HepG2 (cell line): ENCODE measurements at regions of chr15 and their contacts with region 1.

Region 1: DNA sequence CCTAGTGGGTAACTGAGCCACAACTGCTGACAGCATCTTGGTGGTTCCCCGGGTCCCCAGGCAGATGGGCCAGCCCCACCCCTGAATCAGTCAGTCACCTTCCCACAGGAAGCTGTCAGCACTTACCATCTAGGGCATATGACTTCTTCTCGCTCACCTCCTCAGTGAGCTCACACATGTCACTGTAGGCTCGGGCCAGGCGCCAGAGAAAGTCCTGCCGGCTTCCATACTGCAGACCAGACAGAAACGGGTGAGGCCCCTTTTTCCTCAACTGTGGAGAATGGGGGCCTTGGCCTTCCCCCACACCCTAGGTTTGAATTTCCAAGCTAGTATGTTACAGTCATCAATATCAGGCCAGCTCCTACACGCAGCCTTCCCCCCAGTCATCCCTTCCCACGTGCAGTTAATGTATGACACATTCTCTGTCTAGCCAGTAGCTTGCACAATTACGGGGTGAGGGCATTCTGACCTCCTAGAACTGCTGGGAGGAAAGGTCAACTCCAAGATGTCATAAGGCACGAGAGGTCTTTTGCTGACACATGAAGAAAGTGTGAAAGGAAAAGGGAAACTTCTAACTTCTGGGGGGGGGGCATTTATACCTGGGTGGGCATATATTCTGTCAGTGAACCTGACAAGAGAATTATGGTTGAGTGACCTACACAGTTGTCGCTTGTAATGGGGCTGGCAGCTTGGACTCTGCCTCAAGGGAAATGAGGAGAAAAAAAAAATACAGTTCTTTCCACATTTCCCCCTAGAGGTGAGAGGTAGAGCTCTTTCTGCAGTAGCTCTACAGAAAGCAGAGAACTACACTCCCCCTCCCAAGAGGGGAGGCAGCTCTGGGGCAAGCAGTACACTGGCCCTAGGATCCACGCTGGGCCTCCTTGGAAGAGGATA is 10.9 kb downstream of the RMDN3 start:
- DNase-seq: no peak
- ATAC-seq: peak; percentile 44; the same call in 2 of the 3 replicates
- H3K4me3 ChIP-seq: no peak overlapping the region
- H3K27ac ChIP-seq: no peak overlapping the region
- H3K4me1 ChIP-seq: peaks cover 7% of the 10 kb centered on the region; the same call in 1 of the 2 replicates
- H3K27me3 ChIP-seq: no peaks in the 10 kb centered on the region
- CTCF ChIP-seq: no peak
- EP300 ChIP-seq: no peak
- POLR2A ChIP-seq: no peak
- RAD21 ChIP-seq: no peak

Region 2: GRCh38 chr15:40684381-40684780 is 59.8 kb before region 1 on chr15:
- CTCF ChIA-PET with region 1: no interaction called
- POLR2A ChIA-PET with region 1: no interaction called
- in situ Hi-C with region 1: no loop called
- intact Hi-C with region 1: loop called (anchors 5 kb)
- DNase-seq: no peak
- ATAC-seq: no peak
- H3K4me3 ChIP-seq: no peak overlapping the region
- H3K27ac ChIP-seq: no peak overlapping the region
- H3K4me1 ChIP-seq: peaks cover 16% of the 10 kb centered on the region
- H3K27me3 ChIP-seq: no peaks in the 10 kb centered on the region
- CTCF ChIP-seq: no peak
- EP300 ChIP-seq: no peak
- POLR2A ChIP-seq: no peak
- RAD21 ChIP-seq: no peak